Activated naive CD8-positive, alpha-beta T cell treated with anti-CD3 and anti-CD28 coated beads, Interleukin-2, amount 10 ng/mL, durations not matched to agents 7 days and 5 days (primary cell): ENCODE measurements at regions of chr10 and their contacts with region 1.

Region 1: DNA sequence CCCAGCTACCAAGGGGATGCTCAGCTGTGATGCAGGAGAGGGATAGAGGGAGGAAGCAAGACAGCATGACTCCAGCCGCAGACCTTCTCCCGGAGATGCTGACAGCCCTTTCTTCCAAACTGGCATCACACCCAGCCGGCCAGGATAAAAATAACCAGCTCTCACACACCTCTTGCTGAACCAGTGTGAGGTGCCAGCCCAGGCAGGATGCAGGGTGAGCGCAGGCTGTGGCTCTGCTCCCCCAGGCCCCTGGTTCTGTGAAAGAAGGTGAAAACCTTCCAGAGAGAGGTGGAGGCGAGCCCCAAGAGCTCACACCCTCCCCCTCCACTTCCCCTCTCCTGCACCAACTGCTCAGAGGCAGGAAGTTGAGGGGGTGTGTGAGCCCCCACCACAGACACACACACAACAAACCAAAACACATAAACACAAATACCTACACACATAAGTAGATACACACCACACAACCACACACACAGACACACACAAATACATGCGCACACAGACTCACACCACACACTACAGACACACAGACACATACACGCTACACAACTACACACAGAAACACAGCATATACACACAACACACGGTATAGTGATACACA is 4.0 kb downstream of the GPR15LG start:
- DNase-seq: peak; percentile 66
- ATAC-seq: peak; percentile 99
- H3K4me3 Mint-ChIP-seq: no peak overlapping the region
- H3K27ac Mint-ChIP-seq: no peak overlapping the region
- H3K4me1 Mint-ChIP-seq: peaks cover 4% of the 10 kb centered on the region
- H3K27me3 Mint-ChIP-seq: no peaks in the 10 kb centered on the region

Region 2: GRCh38 chr10:84139126-84140035 is 38.3 kb before region 1 on chr10 and contains the start of gene GHITM:
- POLR2A ChIA-PET with region 1: interaction called, 10 read pairs
- DNase-seq: peak; percentile 99
- ATAC-seq: peak; percentile 95
- H3K4me3 Mint-ChIP-seq: peak within 1 kb of the TSS; percentile 93
- H3K27ac Mint-ChIP-seq: peak within 1 kb of the TSS; percentile 98
- H3K4me1 Mint-ChIP-seq: peaks cover 22% of the 10 kb centered on the region
- H3K27me3 Mint-ChIP-seq: peaks cover 2% of the 10 kb centered on the region
- total RNA-seq, gene GHITM: 100.0 to 103 TPM

Region 3: GRCh38 chr10:84237199-84238051 is 59.8 kb after region 1 on chr10:
- POLR2A ChIA-PET with region 1: no interaction called
- DNase-seq: no peak
- ATAC-seq: no peak
- H3K4me3 Mint-ChIP-seq: no peak overlapping the region
- H3K27ac Mint-ChIP-seq: no peak overlapping the region
- H3K4me1 Mint-ChIP-seq: no peaks in the 10 kb centered on the region
- H3K27me3 Mint-ChIP-seq: peaks cover 15% of the 10 kb centered on the region

Region 4: GRCh38 chr10:84269773-84270172 is 92.1 kb after region 1 on chr10:
- POLR2A ChIA-PET with region 1: no interaction called
- DNase-seq: no peak
- ATAC-seq: no peak
- H3K4me3 Mint-ChIP-seq: no peak overlapping the region
- H3K27ac Mint-ChIP-seq: no peak overlapping the region
- H3K4me1 Mint-ChIP-seq: peaks cover 16% of the 10 kb centered on the region
- H3K27me3 Mint-ChIP-seq: peaks cover 11% of the 10 kb centered on the region

Region 5: GRCh38 chr10:84291384-84291783 is 113.7 kb after region 1 on chr10:
- POLR2A ChIA-PET with region 1: no interaction called
- DNase-seq: no peak
- ATAC-seq: no peak
- H3K4me3 Mint-ChIP-seq: no peak overlapping the region
- H3K27ac Mint-ChIP-seq: no peak overlapping the region
- H3K4me1 Mint-ChIP-seq: peaks cover 30% of the 10 kb centered on the region
- H3K27me3 Mint-ChIP-seq: peaks cover 9% of the 10 kb centered on the region

Region 6: DNA sequence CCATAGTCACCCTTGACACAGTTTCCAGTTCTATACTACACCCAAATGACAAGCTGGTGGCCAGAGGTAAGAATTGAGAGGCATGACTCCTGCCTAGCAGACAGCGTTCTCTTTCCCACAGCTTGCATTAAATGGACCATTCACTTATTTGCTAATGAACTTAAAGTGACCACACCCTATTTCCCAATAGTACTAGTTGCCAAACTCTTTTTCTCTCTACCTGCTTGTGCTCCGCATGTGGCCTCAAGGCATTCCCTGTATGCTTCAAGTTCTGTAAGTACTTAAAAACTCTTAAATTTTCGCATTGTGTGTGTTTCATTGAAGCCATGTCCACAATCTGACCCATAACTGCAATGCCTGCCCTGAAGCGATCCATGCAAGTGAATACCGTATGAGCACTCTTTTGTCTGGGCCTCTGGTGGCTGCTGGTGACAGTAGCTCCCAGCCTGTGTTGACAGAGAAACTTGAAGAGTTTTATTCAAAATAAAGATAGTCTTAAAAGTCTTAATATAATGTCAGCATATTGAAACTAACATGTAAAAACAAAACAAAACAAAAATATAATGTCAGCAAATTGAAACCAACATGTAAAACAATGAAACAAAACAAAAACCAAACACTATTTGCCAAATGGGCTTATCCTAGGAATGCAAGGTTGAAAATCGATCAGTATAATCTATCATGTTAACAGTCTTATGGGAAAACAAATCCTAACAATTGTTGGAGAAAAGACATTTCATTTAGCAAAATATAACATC is 224.4 kb after region 1 on chr10:
- POLR2A ChIA-PET with region 1: no interaction called
- DNase-seq: no peak
- ATAC-seq: no peak
- H3K4me3 Mint-ChIP-seq: no peak overlapping the region
- H3K27ac Mint-ChIP-seq: no peak overlapping the region
- H3K4me1 Mint-ChIP-seq: peaks cover 19% of the 10 kb centered on the region
- H3K27me3 Mint-ChIP-seq: no peaks in the 10 kb centered on the region